ENCODE measurements at regions of chr17 and their contacts with region 1.

Region 1: GRCh38 chr17:16987830-16988601 is 16.1 kb upstream of the TNFRSF13B start:
- DNase-seq: peak; percentile 86
- H3K4me3 Mint-ChIP-seq: peak overlapping the region; percentile 41
- H3K27ac Mint-ChIP-seq: peak overlapping the region; percentile 91
- H3K4me1 Mint-ChIP-seq: peaks cover 49% of the 10 kb centered on the region
- H3K27me3 Mint-ChIP-seq: no peaks in the 10 kb centered on the region

Region 2: DNA sequence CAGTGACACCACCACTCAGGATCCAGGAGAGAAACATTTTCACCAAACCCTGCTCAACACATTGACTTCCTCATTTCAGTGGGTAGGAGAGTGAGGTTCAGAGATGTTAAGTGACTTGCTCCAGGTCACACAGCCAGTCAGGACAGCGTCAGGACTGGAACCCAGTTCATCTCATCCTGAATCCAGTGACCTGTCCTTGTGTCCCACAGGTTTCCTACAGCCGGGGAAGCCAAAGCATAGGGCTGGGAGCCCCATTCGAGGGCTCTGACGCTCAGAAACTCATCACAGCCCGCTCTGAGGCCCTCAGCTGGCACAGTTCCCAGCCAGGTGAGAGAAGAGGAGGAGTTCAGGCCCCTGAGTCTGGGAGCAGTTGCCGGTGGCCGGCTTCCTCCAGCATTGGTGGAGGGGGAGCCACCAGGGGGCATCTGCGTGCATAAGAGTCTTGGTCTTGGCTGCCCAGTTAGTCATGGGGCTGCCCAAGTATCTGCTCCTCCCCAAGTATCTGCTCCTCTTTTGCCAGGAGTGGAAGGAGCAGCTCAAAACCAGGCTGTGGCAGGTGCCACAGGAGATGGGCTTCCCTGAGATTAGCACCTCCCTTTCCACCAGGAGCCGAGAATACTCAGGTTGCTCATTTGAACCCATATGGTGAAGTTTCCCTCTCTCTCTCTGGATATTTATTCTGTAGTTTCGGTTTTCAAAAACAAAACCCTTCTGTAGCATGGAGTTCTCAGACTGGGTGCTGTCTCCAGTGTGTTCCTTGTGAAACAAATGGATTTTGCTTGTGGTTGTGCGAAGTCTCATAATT is 72.1 kb before region 1 on chr17:
- CTCF ChIA-PET with region 1: interaction called, 13 read pairs
- POLR2A ChIA-PET with region 1: no interaction called
- DNase-seq: peak; percentile 51
- H3K4me3 Mint-ChIP-seq: no peak overlapping the region
- H3K27ac Mint-ChIP-seq: no peak overlapping the region
- H3K4me1 Mint-ChIP-seq: no peaks in the 10 kb centered on the region
- H3K27me3 Mint-ChIP-seq: peaks cover 16% of the 10 kb centered on the region

Region 3: GRCh38 chr17:16977932-16978331 is 10.1 kb before region 1 on chr17:
- CTCF ChIA-PET with region 1: interaction called, 7 read pairs
- POLR2A ChIA-PET with region 1: interaction called, 34 read pairs
- DNase-seq: no peak
- H3K4me3 Mint-ChIP-seq: no peak overlapping the region
- H3K27ac Mint-ChIP-seq: no peak overlapping the region
- H3K4me1 Mint-ChIP-seq: peaks cover 28% of the 10 kb centered on the region
- H3K27me3 Mint-ChIP-seq: peaks cover 2% of the 10 kb centered on the region

Measured in activated CD4-positive, alpha-beta memory T cell treated with anti-CD3 and anti-CD28 coated beads, Interleukin-2, amount 10 ng/mL, durations not matched to agents 7 days and 5 days (primary cell).